Activated naive CD8-positive, alpha-beta T cell treated with anti-CD3 and anti-CD28 coated beads, Interleukin-2, amount 10 ng/mL, durations not matched to agents 7 days and 5 days (primary cell): ENCODE measurements at regions of chr20 and their contacts with region 1.

Region 1: DNA sequence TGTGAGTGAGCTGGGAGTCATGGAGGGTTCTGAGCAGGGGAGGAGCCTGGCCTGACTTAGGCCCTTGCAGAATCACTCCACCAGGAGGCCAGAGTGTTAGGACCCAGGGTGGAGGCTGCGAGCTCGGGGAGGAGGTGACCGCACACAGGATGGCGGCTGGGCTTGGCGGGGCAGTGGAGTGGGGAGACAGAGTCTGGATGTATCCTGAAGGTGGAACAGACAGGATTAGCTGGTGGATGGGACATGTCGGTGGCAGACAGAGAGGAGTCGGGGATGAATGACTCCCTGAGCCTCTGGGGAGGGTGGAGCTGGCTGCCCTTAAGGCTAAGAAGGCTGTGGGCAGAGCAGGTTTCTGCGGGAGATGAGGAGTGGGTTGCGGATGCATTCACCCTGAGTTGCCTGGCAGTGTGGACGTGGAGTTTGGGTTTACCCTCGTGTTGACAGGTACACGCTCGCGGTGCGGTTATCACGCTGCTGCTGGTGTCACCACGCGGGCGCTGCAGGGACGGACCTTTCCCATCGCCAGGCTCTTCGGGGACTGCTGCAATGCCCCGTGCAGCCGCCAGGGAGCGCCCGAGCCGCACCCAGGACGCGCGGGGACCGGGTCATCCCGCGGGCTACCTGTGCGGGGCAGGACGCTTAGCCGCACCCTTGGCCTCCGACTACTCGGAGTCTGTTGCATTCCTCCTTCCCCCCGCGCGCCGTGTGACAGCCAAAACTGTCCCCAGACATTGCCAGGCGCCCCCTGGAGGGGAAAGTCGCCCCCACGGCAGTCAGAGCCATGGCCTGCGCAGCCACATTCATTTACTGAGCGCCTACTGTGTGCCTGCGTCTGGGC is 43.0 kb upstream of the PTGIS start:
- DNase-seq: peak; percentile 92
- ATAC-seq: peak; percentile 63
- H3K4me3 Mint-ChIP-seq: peak overlapping the region; percentile 77
- H3K27ac Mint-ChIP-seq: peak overlapping the region; percentile 64
- H3K4me1 Mint-ChIP-seq: peaks cover 18% of the 10 kb centered on the region
- H3K27me3 Mint-ChIP-seq: no peaks in the 10 kb centered on the region

Region 2: DNA sequence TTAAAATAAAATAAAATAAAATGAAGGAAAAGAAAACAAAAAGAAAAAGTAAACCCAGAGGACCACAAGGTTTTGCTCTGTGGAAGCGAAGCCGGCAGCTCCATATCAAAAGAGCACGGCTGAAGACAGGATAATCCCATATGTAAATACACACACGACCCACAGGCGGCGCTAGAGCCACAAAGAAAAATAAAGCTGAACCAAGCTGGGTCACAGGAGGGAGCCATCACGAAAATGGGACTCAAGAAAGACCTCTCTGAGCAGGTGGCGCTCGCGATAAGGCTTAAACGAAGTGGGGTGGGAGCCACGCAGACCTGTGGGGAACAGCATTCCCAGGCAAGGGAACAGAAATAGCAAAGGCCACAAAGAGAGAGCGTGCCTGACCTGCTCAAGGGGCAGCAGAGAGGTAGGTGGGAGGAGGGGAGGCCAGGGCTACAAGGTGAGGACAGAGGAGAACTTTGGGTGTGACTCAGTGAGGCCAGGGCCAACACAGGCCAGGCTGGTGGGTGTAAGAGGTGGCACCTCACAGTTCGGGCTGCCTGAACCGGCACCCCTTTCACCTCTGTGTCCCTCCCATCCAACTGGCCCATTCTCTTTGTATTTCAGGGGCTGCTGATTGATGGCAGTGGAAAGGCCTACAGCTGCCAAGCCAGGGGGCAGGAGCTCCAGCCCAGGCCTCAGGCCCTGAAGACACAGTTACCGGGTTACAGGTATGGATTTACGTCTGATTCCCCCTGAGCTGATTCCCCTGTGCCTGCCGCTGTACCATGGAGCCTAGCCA is 69.0 kb before region 1 on chr20:
- POLR2A ChIA-PET with region 1: interaction called, 43 read pairs
- DNase-seq: peak; percentile 78
- ATAC-seq: peak; percentile 79
- H3K4me3 Mint-ChIP-seq: no peak overlapping the region
- H3K27ac Mint-ChIP-seq: peak overlapping the region; percentile 87
- H3K4me1 Mint-ChIP-seq: peaks cover 9% of the 10 kb centered on the region
- H3K27me3 Mint-ChIP-seq: peaks cover 13% of the 10 kb centered on the region

Region 3: GRCh38 chr20:49631061-49631788 is 20.3 kb after region 1 on chr20:
- POLR2A ChIA-PET with region 1: no interaction called
- DNase-seq: no peak
- ATAC-seq: no peak
- H3K4me3 Mint-ChIP-seq: no peak overlapping the region
- H3K27ac Mint-ChIP-seq: no peak overlapping the region
- H3K4me1 Mint-ChIP-seq: peaks cover 9% of the 10 kb centered on the region
- H3K27me3 Mint-ChIP-seq: peaks cover 1% of the 10 kb centered on the region